Caco-2 (cell line): ENCODE measurements at regions of chr2 and their contacts with region 1.

Region 1: GRCh38 chr2:190853531-190854383 is 26.9 kb upstream of the GLS start:
- DNase-seq: no peak
- H3K4me3 ChIP-seq: no peak overlapping the region
- H3K4me3 Mint-ChIP-seq: no peak overlapping the region
- H3K27ac Mint-ChIP-seq: no peak overlapping the region
- H3K4me1 ChIP-seq: peaks cover 37% of the 10 kb centered on the region
- H3K4me1 Mint-ChIP-seq: peaks cover 34% of the 10 kb centered on the region
- H3K27me3 ChIP-seq: no peaks in the 10 kb centered on the region
- H3K27me3 Mint-ChIP-seq: no peaks in the 10 kb centered on the region
- CTCF ChIP-seq: no peak

Region 2: DNA sequence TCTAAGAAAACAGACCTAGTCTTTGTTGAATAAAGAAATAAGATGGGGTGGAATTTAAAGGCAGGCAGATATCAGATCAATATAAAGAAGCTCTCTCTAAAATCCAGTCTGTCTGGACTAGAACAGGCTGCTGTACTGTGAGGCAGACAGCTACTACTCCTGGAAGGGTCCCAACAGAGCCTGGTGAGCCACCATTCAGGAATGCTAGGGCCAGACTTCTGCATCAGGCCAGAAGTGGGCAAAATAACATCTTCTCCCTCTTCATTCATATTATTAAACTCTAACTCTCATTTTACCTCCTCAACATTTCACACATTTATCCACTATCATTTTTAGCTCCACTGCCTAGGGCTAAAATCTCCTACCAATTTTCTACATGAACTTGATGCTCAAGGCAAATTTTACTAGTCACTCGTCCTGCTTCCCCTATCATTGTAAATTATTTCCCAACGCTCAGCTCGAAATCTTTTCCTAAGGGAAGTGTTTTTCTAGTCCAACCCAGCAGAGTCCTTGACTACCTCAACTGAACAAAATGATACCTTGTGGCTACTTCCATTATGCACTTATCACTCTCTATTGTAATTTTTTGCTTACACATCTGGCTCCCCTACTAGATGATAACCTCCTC is 18.3 kb before region 1 on chr2:
- CTCF ChIA-PET with region 1: no interaction called
- POLR2A ChIA-PET with region 1: no interaction called
- intact Hi-C with region 1: loop called (anchors 2 kb)
- DNase-seq: no peak
- H3K4me3 ChIP-seq: no peak overlapping the region
- H3K4me3 Mint-ChIP-seq: no peak overlapping the region
- H3K27ac Mint-ChIP-seq: no peak overlapping the region
- H3K4me1 ChIP-seq: peaks cover 5% of the 10 kb centered on the region
- H3K4me1 Mint-ChIP-seq: peaks cover 9% of the 10 kb centered on the region
- H3K27me3 ChIP-seq: no peaks in the 10 kb centered on the region
- H3K27me3 Mint-ChIP-seq: no peaks in the 10 kb centered on the region
- CTCF ChIP-seq: no peak

Region 3: GRCh38 chr2:190863946-190864345 is 10.2 kb after region 1 on chr2:
- CTCF ChIA-PET with region 1: no interaction called
- POLR2A ChIA-PET with region 1: no interaction called
- intact Hi-C with region 1: loop called (anchors 1 kb)
- DNase-seq: peak; percentile 62 to 71
- H3K4me3 ChIP-seq: no peak overlapping the region
- H3K4me3 Mint-ChIP-seq: no peak overlapping the region
- H3K27ac Mint-ChIP-seq: no peak overlapping the region
- H3K4me1 ChIP-seq: peaks cover 25% of the 10 kb centered on the region
- H3K4me1 Mint-ChIP-seq: peaks cover 24% of the 10 kb centered on the region
- H3K27me3 ChIP-seq: no peaks in the 10 kb centered on the region
- H3K27me3 Mint-ChIP-seq: no peaks in the 10 kb centered on the region
- CTCF ChIP-seq: no peak

Region 4: GRCh38 chr2:190953257-190953656 is 99.5 kb after region 1 on chr2:
- CTCF ChIA-PET with region 1: no interaction called
- POLR2A ChIA-PET with region 1: no interaction called
- intact Hi-C with region 1: no loop called
- DNase-seq: no peak
- H3K4me3 ChIP-seq: no peak overlapping the region
- H3K4me3 Mint-ChIP-seq: no peak overlapping the region
- H3K27ac Mint-ChIP-seq: no peak overlapping the region
- H3K4me1 ChIP-seq: peaks cover 17% of the 10 kb centered on the region
- H3K4me1 Mint-ChIP-seq: peaks cover 3% of the 10 kb centered on the region
- H3K27me3 ChIP-seq: no peaks in the 10 kb centered on the region
- H3K27me3 Mint-ChIP-seq: no peaks in the 10 kb centered on the region
- CTCF ChIP-seq: no peak

Region 5: GRCh38 chr2:191078165-191078867 is 224.6 kb after region 1 on chr2:
- CTCF ChIA-PET with region 1: no interaction called
- POLR2A ChIA-PET with region 1: no interaction called
- intact Hi-C with region 1: no loop called
- DNase-seq: no peak
- H3K4me3 ChIP-seq: no peak overlapping the region
- H3K4me3 Mint-ChIP-seq: no peak overlapping the region
- H3K27ac Mint-ChIP-seq: no peak overlapping the region
- H3K4me1 ChIP-seq: no peaks in the 10 kb centered on the region
- H3K4me1 Mint-ChIP-seq: no peaks in the 10 kb centered on the region
- H3K27me3 ChIP-seq: no peaks in the 10 kb centered on the region
- H3K27me3 Mint-ChIP-seq: peaks cover 7% of the 10 kb centered on the region
- CTCF ChIP-seq: no peak